GM12878 (cell line): ENCODE measurements at regions of chr19 and their contacts with region 1.

Region 1: DNA sequence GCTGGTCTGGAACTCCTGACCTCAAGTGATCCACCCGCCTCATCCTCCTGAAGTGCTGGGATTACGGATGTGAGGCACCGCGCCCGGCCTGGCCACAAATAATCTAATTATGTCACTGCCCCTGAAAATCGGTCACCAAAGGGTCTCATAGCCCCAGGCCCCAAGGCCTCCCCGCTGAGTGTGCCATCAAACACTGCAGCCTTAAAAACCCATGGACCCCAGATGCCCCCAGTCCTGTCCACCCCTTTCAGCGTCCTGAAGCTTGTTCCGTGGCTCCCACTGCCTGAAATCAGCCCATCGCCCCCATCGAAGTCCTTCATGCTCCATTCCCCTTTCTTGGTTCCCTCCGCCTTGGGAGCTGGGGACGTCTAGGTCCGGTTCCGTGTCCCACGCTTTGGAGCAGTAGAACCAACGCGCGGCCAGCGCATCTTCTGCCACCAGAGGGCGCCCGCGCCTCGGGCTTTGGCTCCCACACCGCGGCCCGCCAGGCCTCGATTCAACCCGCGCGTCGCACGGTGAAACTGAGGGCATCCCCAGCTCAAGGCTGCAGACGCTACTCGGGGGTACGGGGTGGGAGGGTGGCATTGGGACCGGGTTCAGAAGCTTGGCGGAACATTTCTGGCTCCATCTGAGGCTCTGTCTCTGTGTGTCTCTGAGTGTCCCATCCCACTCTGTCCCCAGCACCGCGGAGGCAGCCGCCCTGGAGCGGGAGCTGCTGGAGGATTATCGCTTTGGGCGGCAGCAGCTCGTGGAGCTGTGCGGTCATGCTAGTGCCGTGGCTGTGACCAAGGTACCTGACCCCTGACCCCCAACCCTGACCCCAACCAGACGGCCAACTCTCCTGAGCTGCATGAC is 3.5 kb downstream of the YJEFN3 start:
- DNase-seq: no peak
- ATAC-seq: peak; percentile 93
- H3K4me3 ChIP-seq: no peak overlapping the region
- H3K27ac ChIP-seq: no peak overlapping the region
- H3K4me1 ChIP-seq: no peaks in the 10 kb centered on the region
- H3K27me3 ChIP-seq: no peaks in the 10 kb centered on the region
- CTCF ChIP-seq: peak; percentile 95 to 96 (median 95)
- EP300 ChIP-seq: no peak
- POLR2A ChIP-seq: peak; percentile 47
- RAD21 ChIP-seq: peak; percentile 96

Region 2: DNA sequence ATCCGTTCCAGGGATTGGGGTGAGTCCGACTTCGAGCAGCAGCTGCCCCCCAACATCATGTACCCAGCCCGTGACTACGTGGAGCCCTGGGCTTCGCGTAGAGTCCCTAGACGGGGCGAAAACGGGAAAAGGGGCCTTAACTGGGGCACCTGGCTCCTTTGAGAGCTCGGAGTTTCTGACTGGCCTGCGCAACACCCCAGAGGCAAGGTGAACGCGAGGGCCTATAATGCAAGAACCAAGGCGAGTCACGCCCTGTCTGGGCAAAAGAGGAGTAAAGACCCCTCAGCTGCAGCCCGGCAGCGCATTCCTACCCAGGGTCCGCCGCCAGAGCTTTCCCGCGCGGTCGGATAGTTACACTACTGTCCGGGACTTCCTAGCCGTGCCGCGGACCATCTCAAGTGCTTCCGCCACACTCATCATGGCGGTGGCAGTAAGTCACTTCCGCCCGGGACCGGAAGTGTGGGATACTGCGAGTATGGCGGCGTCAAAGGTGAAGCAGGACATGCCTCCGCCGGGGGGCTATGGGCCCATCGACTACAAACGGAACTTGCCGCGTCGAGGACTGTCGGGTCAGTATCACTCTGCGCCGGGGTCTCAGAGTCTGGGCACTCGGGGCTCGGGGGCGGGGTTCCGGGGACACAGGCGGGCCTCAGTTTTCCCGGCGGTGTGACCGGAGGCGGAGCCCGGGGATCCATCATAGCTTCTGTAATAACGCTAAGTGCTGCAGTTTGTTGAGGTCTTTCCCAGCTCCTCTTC is 16.2 kb before region 1 on chr19 and contains the start of gene NDUFA13:
- CTCF ChIA-PET with region 1: interaction called, 11 read pairs
- POLR2A ChIA-PET with region 1: interaction called, 5 read pairs
- RAD21 ChIA-PET with region 1: no interaction called
- SMC1A ChIA-PET with region 1: interaction called, 8 read pairs
- in situ Hi-C with region 1: no loop called
- intact Hi-C with region 1: no loop called
- DNase-seq: peak; percentile 89
- ATAC-seq: peak; percentile 94
- H3K4me3 ChIP-seq: peak within 1 kb of the TSS; percentile 85
- H3K27ac ChIP-seq: peak within 1 kb of the TSS; percentile 93
- H3K4me1 ChIP-seq: peaks cover 9% of the 10 kb centered on the region; the same call in 1 of the 2 replicates
- H3K27me3 ChIP-seq: no peaks in the 10 kb centered on the region
- CTCF ChIP-seq: 0 out of 6 replicates have a peak, but pooled peaks of 1 of the 3 experiments have one; percentile 1
- EP300 ChIP-seq: no peak
- POLR2A ChIP-seq: peak; percentile 96
- RAD21 ChIP-seq: no peak
- polyA plus RNA-seq, gene NDUFA13: 232 to 449 TPM

Region 3: GRCh38 chr19:19591133-19591825 is 59.1 kb after region 1 on chr19:
- CTCF ChIA-PET with region 1: interaction called, 13 read pairs
- POLR2A ChIA-PET with region 1: no interaction called
- RAD21 ChIA-PET with region 1: interaction called, 10 read pairs
- SMC1A ChIA-PET with region 1: no interaction called
- in situ Hi-C with region 1: no loop called
- intact Hi-C with region 1: no loop called
- DNase-seq: peak; percentile 84
- ATAC-seq: peak; percentile 94
- H3K4me3 ChIP-seq: no peak overlapping the region
- H3K27ac ChIP-seq: peak overlapping the region; percentile 86
- H3K4me1 ChIP-seq: peaks cover 22% of the 10 kb centered on the region
- H3K27me3 ChIP-seq: no peaks in the 10 kb centered on the region
- CTCF ChIP-seq: no peak
- EP300 ChIP-seq: no peak
- POLR2A ChIP-seq: no peak
- RAD21 ChIP-seq: no peak

Region 4: DNA sequence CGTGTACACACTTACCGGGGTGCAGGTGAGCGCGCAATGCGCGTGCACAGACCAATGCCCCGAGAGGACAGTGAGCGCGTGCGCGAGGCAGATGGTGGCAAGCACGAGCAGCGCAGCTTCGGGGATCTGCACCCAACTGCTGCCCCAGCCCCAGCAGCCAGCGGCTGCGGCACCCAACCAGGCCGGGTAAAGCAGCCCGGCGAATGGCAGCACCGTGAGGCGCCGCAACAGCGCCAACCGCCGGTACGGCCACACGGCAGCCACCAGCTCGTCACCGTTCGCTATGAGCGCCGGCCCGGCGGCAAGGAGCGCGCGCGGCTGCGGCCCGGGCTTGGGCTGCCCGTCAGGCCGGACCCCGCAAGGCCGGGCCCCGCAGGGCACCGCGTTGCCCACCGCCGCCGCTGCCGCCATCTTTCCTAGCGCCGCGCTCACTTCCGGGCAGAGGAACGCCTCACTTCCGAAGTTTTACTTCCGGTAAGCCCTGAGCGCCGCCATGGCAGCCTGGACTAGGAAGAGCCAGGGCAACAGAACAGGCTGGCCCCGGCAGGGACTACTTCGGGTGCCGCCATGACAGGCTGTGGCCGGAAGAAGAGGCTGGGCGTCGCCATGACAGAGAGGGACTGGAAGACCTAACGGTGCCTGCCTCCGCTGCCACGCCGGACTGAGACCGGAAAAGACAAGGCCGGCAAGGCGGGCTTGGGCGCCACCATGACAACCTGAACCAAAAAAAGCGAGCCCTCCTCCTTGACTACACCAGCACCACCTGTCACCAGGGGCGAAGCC is 131.3 kb after region 1 on chr19 and contains the start of gene ATP13A1:
- CTCF ChIA-PET with region 1: interaction called, 28 read pairs
- POLR2A ChIA-PET with region 1: no interaction called
- RAD21 ChIA-PET with region 1: interaction called, 9 read pairs
- SMC1A ChIA-PET with region 1: interaction called, 6 read pairs
- in situ Hi-C with region 1: no loop called
- intact Hi-C with region 1: no loop called
- DNase-seq: peak; percentile 92
- ATAC-seq: peak; percentile 78
- H3K4me3 ChIP-seq: peak within 1 kb of the TSS; percentile 87
- H3K27ac ChIP-seq: peak within 1 kb of the TSS; percentile 97
- H3K4me1 ChIP-seq: peaks cover 11% of the 10 kb centered on the region
- H3K27me3 ChIP-seq: no peaks in the 10 kb centered on the region
- CTCF ChIP-seq: no peak; a peak in 1 of 6 replicates
- EP300 ChIP-seq: no peak
- POLR2A ChIP-seq: peak; percentile 88
- RAD21 ChIP-seq: no peak
- polyA plus RNA-seq, gene ATP13A1: 0.37 to 1.4 TPM

Region 5: DNA sequence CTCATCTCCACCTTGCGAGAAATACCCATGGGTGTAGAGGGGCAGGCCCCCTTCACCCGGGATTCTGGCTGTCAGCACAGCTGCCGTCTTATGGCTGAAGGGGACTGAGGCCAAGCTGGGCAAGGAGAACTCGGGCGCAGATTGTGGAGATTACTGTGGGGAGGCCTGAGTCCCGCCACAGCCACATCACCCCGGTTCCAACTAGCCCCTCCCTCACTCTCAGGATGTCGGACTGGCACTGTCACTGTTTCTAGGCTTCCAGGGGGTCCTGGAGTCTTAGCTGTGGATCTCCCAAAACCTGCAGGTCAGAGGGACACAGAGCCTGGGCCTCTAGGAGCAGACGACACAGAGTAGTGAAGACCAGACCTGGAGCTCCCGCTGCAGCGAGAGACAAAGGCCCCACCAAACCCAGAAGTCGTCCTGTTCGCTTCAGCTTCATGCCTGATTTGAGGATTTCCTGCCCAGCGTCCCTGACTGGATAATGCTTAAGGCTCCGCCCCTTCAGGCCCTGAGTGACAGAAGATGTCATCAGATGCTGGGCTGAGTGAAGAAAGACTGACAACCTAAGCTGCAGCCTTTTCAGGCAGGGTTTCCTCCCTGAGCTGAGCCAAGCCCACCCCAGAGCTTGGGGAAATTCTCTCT is 424.4 kb after region 1 on chr19:
- CTCF ChIA-PET with region 1: interaction called, 15 read pairs
- POLR2A ChIA-PET with region 1: no interaction called
- RAD21 ChIA-PET with region 1: no interaction called
- SMC1A ChIA-PET with region 1: interaction called, 5 read pairs
- in situ Hi-C with region 1: loop called (anchors 5 kb)
- intact Hi-C with region 1: loop called (anchors 1 kb)
- DNase-seq: no peak
- ATAC-seq: no peak
- H3K4me3 ChIP-seq: no peak overlapping the region
- H3K27ac ChIP-seq: no peak overlapping the region
- H3K4me1 ChIP-seq: no peaks in the 10 kb centered on the region
- H3K27me3 ChIP-seq: no peaks in the 10 kb centered on the region
- CTCF ChIP-seq: no peak
- EP300 ChIP-seq: no peak
- POLR2A ChIP-seq: no peak
- RAD21 ChIP-seq: no peak

Region 6: GRCh38 chr19:20565321-20566018 is 1033.3 kb after region 1 on chr19 and contains the start of gene ZNF737:
- CTCF ChIA-PET with region 1: no interaction called
- POLR2A ChIA-PET with region 1: no interaction called
- RAD21 ChIA-PET with region 1: no interaction called
- SMC1A ChIA-PET with region 1: no interaction called
- in situ Hi-C with region 1: loop called (anchors 25 kb)
- intact Hi-C with region 1: no loop called
- DNase-seq: peak; percentile 75
- ATAC-seq: peak; percentile 98
- H3K4me3 ChIP-seq: peak within 1 kb of the TSS; percentile 90
- H3K27ac ChIP-seq: peak within 1 kb of the TSS; percentile 74
- H3K4me1 ChIP-seq: no peaks in the 10 kb centered on the region
- H3K27me3 ChIP-seq: no peaks in the 10 kb centered on the region
- CTCF ChIP-seq: 0 out of 6 replicates have a peak, but pooled peaks of 2 of the 3 experiments have one; percentile 12 to 14
- EP300 ChIP-seq: no peak
- POLR2A ChIP-seq: peak; percentile 76
- RAD21 ChIP-seq: no peak
- polyA plus RNA-seq, gene ZNF737: 0.53 to 0.85 TPM

Region 7: GRCh38 chr19:21028969-21029268 is 1496.7 kb after region 1 on chr19:
- CTCF ChIA-PET with region 1: no interaction called
- POLR2A ChIA-PET with region 1: no interaction called
- RAD21 ChIA-PET with region 1: no interaction called
- SMC1A ChIA-PET with region 1: no interaction called
- in situ Hi-C with region 1: loop called (anchors 25 kb)
- intact Hi-C with region 1: no loop called
- DNase-seq: no peak
- ATAC-seq: peak; percentile 11
- H3K4me3 ChIP-seq: peak overlapping the region; percentile 49; the same call in 1 of the 2 replicates
- H3K27ac ChIP-seq: no peak overlapping the region; the same call in 1 of the 2 replicates
- H3K4me1 ChIP-seq: peaks cover 7% of the 10 kb centered on the region
- H3K27me3 ChIP-seq: no peaks in the 10 kb centered on the region
- CTCF ChIP-seq: no peak
- EP300 ChIP-seq: no peak
- POLR2A ChIP-seq: no peak
- RAD21 ChIP-seq: no peak